Cardiac septum (tissue), 1 donor: ENCODE measurements at regions of chr7 and their contacts with region 1.

Region 1: GRCh38 chr7:92042056-92042737 is 92.1 kb downstream of the CYP51A1 start:
- DNase-seq: no peak

Region 2: DNA sequence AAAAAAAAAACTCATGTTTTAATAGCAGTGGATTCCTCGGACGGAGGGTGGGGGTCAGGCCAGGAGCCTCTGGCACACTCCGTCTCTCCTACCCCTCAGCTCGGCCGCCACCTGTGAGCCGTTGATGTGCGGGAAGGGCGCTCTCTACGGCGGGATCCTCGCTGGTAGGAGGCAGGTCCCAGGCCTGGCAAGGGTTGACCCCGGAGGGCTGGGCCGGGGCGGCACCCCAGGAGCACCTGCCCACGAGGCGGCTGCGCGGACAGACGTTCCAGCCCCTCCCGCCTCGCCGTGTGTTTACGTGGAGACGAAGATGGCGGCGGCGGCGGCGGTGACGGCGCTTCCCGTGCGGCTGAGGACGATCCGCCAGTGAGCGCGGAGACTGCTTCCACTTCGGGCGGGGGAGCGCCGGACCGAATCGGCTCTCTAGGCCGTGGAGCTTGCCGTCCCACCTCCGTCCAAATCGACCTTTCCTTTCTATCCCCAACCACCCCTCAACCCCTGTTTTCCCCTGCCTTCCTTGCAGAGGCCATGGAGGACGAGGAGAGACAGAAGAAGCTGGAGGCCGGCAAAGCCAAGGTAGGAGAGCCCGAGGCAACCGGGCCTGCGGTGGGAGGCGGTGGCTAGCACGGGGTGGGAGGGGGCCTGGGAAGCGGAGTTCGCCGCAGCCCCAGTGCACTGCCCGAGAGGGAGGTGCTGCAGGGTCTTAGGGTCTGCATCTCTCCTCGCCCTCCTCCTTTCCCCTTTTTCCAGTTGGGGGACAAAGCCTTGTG is 101.4 kb before region 1 on chr7 and contains the start of gene AKAP9:
- intact Hi-C with region 1: loop called (anchors 10 kb)
- DNase-seq: peak; percentile 95
- total RNA-seq, gene AKAP9: 36.2 TPM

Region 3: DNA sequence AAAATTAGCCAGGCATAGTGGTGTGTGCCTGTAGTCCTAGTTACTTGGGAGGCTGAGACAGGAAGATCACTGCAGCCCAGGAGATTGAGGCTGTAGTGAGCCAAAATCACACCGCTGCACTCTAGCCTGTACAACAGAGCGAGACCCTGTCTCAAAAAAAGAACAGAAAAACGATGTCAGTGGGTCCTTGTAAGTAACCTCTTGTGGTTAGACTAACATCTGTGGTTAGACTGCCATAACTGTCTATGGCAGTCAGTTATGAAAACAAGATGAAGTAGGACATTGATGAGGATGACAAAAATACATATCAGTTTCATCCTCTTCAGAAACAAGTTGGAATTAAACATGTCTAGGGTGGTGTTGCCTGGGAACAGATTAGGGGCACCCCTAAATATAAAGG is 48.2 kb before region 1 on chr7:
- intact Hi-C with region 1: no loop called
- DNase-seq: no peak